PC-9 (cell line): ENCODE measurements at regions of chr3 and their contacts with region 1.

Region 1: GRCh38 chr3:115804722-115805121 is 181.4 kb downstream of the GAP43 start:
- DNase-seq: peak in 1 of 2 experiments; percentile 85
- H3K4me3 ChIP-seq: no peak overlapping the region
- H3K27ac ChIP-seq: peak overlapping the region; percentile 84
- H3K4me1 ChIP-seq: peaks cover 45% of the 10 kb centered on the region
- H3K27me3 ChIP-seq: no peaks in the 10 kb centered on the region
- CTCF ChIP-seq: no peak

Region 2: GRCh38 chr3:115790759-115791158 is 14.0 kb before region 1 on chr3:
- CTCF ChIA-PET with region 1: interaction called, 3 read pairs
- POLR2A ChIA-PET with region 1: no interaction called
- intact Hi-C with region 1: loop called (anchors 1 kb)
- DNase-seq: peak; percentile 79 to 91
- H3K4me3 ChIP-seq: peak overlapping the region; percentile 5; the same call in 1 of the 2 replicates
- H3K27ac ChIP-seq: peak overlapping the region; percentile 89
- H3K4me1 ChIP-seq: peaks cover 54% of the 10 kb centered on the region
- H3K27me3 ChIP-seq: no peaks in the 10 kb centered on the region
- CTCF ChIP-seq: no peak

Region 3: DNA sequence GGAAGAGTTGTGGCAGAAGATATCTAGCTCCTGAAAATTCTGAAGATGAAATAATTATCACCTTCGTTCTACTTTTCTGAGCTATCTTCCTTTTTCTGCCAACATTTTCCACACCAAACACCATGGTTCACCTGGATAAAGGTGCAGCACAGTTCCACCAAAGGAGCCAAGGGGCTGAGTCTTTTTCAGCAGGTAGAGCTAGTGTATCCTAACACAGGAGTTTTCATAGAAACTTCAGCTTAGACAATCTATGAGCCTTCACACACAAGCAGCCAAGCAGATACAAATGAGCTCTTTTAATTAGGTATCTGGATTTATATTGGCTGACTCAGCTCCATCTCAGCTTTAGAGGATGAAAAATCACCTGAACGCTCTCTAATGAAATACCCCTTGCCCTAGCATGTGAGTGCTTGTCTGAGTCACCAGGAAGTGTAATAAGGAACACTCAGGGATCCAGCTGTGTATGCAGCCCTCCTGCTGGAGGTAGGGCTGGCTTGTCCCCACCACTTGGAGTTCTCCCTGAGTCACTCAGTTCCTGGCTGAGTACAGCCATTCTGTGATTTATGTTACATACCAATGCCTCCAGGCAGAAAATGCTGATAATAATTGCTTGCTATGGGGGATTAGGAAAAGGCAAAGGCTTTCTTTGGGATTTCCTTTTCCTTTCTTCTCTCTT is 254.8 kb after region 1 on chr3:
- CTCF ChIA-PET with region 1: no interaction called
- POLR2A ChIA-PET with region 1: no interaction called
- intact Hi-C with region 1: no loop called
- DNase-seq: peak; percentile 77 to 80
- H3K4me3 ChIP-seq: no peak overlapping the region
- H3K27ac ChIP-seq: peak overlapping the region; percentile 43; the same call in 1 of the 2 replicates
- H3K4me1 ChIP-seq: peaks cover 12% of the 10 kb centered on the region
- H3K27me3 ChIP-seq: no peaks in the 10 kb centered on the region
- CTCF ChIP-seq: no peak